Right ventricle myocardium inferior (tissue), 1 donor: ENCODE measurements at regions of chr5 and their contacts with region 1.

Region 1: GRCh38 chr5:152505442-152506042 is 100.5 kb upstream of the NMUR2 start:
- DNase-seq: no peak
- ATAC-seq: peak; percentile 74

Region 2: GRCh38 chr5:152142840-152143469 is 362.6 kb before region 1 on chr5:
- intact Hi-C with region 1: loop called (anchors 10 kb)
- DNase-seq: peak; percentile 72
- ATAC-seq: peak; percentile 70

Region 3: GRCh38 chr5:152379331-152379730 is 126.2 kb before region 1 on chr5:
- intact Hi-C with region 1: loop called (anchors 1 kb)
- DNase-seq: no peak
- ATAC-seq: no peak

Region 4: GRCh38 chr5:152462021-152462721 is 43.4 kb before region 1 on chr5:
- intact Hi-C with region 1: loop called (anchors 1 kb)
- DNase-seq: no peak
- ATAC-seq: no peak